Ascending aorta (tissue), 2 donors: ENCODE measurements at regions of chr14 and their contacts with region 1.

Region 1: DNA sequence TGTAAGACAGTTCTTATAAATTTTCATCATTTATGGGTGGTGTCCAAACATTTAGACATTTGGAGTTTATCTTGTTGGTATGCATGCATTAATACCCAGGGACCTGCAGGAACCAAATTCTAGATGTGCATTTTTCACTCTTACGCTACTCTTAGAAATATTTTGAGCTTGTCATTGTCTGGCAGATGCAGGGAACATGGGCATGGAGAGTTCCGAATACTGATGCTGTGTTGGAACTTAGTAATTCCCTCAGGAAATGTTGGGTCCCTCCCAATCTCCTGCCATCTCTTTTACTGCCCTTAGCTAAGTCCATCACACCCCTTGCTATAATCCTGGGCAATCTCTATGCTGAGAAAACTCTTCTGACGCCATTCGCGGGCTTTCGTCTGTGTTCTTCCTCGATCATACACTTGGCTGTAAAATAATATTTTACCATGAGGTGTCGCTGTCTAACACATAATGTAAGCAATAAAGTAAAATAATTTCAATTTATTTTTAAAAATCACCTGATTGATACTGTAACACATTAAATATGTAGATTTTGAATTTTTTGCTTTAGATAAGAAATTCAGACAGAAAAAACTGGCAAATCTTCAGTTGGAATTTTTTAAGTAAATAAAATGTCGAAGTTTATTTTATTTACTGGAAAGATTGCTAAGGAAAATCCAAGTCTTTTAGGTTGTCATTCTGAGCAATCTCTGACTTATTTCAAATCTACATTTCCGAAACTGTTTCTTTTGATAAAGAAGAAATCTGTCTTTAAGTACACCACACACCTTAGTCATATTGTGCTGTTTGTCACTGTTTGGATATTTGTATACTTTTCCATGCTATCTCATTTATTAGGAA is 304.1 kb upstream of the SSTR1 start:
- DNase-seq: no peak
- H3K4me3 ChIP-seq: no peak overlapping the region
- H3K27ac ChIP-seq: no peak overlapping the region
- H3K4me1 ChIP-seq: no peaks in the 10 kb centered on the region
- H3K27me3 ChIP-seq: no peaks in the 10 kb centered on the region
- CTCF ChIP-seq: peak; percentile 28 to 61 (median 36)

Region 2: DNA sequence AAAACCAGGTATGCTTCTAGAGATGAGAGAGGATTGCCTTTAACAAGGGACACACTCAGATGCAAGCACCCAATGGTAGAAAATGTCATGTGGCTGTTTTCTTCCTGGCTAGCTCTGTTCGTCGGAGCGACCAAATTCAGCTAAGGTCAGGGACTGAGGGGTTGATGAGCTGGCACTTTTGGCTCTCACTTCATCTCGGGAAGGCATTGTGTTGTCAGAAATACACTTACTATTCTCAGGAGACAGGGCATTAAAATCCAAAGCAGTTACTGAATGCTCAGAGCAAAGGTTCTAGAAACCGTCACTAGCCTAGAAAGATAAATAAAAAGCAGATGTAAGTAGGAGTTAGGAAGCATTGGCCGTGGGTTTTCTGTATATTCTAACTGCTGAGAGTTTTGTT is 28.4 kb after region 1 on chr14:
- intact Hi-C with region 1: no loop called
- DNase-seq: no peak
- H3K4me3 ChIP-seq: no peak overlapping the region
- H3K27ac ChIP-seq: no peak overlapping the region
- H3K4me1 ChIP-seq: no peaks in the 10 kb centered on the region
- H3K27me3 ChIP-seq: no peaks in the 10 kb centered on the region
- CTCF ChIP-seq: no peak

Region 3: DNA sequence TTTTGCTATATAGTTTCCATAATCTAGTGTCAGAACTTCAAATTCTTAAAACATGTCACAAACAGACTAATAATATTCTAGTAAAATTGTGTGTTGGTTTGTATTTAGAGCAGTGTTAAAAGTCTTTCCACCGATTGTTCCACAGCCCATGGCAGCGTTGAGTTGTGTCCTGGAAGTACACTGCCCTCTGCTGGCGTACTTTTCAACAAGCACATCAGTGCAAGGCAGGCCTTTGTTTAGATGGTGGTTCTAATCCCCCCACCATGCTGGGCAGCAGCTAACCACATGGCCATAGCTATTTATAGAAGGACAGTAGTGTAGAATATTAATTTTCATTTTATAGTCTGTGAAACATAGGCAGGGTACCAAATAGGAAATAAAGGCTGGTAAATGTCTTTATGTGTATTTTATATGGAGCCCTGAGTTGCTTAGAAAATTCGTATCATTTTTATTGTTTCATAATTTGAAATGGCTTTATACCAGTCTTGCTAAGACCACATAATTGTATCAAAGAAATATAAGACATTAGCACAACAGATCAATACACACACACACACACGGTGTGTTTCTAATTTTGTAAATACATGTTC is 964.1 kb after region 1 on chr14:
- intact Hi-C with region 1: loop called (anchors 2 kb)
- DNase-seq: peak in 1 of 2 donors; percentile 80
- H3K4me3 ChIP-seq: no peak overlapping the region
- H3K27ac ChIP-seq: no peak overlapping the region
- H3K4me1 ChIP-seq: no peaks in the 10 kb centered on the region
- H3K27me3 ChIP-seq: no peaks in the 10 kb centered on the region
- CTCF ChIP-seq: peak; percentile 58 to 79 (median 63)

Region 4: DNA sequence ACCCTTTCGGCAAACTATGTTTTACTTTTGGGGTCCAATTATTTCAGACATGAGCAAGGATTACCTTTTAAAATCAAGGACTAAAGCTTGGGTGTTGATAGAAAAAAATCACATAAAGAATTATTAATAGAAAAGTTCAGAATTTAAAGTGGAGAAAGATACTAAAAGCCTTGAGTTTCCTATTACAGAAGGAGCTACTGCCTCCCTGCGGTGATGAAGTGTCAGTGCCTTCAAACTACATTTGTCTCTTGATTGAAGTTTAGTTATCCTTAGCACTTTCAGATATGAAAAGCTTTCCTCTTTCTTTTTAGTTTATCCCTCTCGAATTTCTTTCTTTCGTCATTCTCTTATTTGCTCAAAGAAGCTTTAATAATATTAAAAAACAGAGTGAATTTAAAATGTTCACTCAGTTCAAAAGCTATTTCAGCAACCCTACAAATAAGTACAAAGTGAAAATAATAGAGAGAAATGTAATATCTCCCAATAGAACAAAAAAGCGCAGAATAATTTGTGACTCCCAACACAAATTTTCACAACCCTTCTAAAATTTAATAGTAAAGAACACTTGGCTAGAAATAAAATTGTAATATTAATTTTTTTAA is 1111.9 kb after region 1 on chr14:
- intact Hi-C with region 1: loop called (anchors 10 kb)
- DNase-seq: no peak
- H3K4me3 ChIP-seq: no peak overlapping the region
- H3K27ac ChIP-seq: no peak overlapping the region
- H3K4me1 ChIP-seq: no peaks in the 10 kb centered on the region
- H3K27me3 ChIP-seq: no peaks in the 10 kb centered on the region
- CTCF ChIP-seq: peak; percentile 35 to 78 (median 75)